ENCODE measurements at regions of chr5 and their contacts with region 1.

Region 1: DNA sequence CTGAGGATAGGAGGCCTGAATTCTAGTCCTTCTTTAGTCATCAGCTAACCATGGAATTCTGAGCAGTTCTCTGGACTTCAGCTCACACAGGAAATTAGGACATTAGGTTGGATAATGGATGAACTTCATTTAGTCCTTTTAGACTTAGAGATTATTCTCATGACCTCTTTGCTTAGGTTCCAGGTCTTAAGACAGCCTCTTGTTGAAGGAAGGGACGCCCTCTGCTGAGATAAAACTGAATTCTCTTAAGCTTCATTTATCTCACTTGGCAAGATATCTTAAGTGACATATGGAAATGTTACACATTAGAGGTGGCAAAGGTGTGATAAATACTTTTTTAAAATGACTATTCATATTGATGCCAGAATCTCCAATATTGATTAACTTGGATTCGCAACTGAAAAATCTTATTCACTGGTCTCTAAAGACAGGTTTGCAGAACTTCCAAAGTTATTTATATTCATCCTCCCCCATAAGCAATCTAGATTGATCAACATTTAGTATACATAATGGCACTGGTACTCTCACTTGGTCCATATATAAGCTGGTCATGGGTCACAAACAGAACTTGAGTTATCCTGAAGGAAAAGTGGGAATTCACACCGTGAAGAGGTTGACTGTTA is 16.9 kb upstream of the ZNF366 start:
- DNase-seq: no peak
- ATAC-seq: peak; percentile 73 to 91 (median 84)
- H3K4me3 ChIP-seq: no peak overlapping the region
- H3K27ac ChIP-seq: no peak overlapping the region
- H3K4me1 ChIP-seq: peaks cover 3% of the 10 kb centered on the region
- H3K27me3 ChIP-seq: no peaks in the 10 kb centered on the region
- CTCF ChIP-seq: peak; percentile 69

Region 2: GRCh38 chr5:72366324-72366976 is 157.6 kb before region 1 on chr5:
- intact Hi-C with region 1: loop called (anchors 1 to 2 kb)
- DNase-seq: peak in 1 of 2 donors; percentile 39
- ATAC-seq: peak; percentile 81 to 95 (median 84)
- H3K4me3 ChIP-seq: no peak overlapping the region
- H3K27ac ChIP-seq: peak overlapping the region; percentile 4
- H3K4me1 ChIP-seq: peaks cover 13% of the 10 kb centered on the region
- H3K27me3 ChIP-seq: no peaks in the 10 kb centered on the region
- CTCF ChIP-seq: peak; percentile 83

Region 3: GRCh38 chr5:72556351-72557166 is 32.5 kb after region 1 on chr5:
- intact Hi-C with region 1: no loop called
- DNase-seq: peak; percentile 72 to 82
- ATAC-seq: peak; percentile 54 to 79 (median 74)
- H3K4me3 ChIP-seq: peak overlapping the region; percentile 62
- H3K27ac ChIP-seq: peak overlapping the region; percentile 68
- H3K4me1 ChIP-seq: peaks cover 36% of the 10 kb centered on the region
- H3K27me3 ChIP-seq: no peaks in the 10 kb centered on the region
- CTCF ChIP-seq: peak; percentile 11

Measured in psoas muscle (tissue), 8 donors.